ENCODE measurements at regions of chr4 and their contacts with region 1.

Region 1: DNA sequence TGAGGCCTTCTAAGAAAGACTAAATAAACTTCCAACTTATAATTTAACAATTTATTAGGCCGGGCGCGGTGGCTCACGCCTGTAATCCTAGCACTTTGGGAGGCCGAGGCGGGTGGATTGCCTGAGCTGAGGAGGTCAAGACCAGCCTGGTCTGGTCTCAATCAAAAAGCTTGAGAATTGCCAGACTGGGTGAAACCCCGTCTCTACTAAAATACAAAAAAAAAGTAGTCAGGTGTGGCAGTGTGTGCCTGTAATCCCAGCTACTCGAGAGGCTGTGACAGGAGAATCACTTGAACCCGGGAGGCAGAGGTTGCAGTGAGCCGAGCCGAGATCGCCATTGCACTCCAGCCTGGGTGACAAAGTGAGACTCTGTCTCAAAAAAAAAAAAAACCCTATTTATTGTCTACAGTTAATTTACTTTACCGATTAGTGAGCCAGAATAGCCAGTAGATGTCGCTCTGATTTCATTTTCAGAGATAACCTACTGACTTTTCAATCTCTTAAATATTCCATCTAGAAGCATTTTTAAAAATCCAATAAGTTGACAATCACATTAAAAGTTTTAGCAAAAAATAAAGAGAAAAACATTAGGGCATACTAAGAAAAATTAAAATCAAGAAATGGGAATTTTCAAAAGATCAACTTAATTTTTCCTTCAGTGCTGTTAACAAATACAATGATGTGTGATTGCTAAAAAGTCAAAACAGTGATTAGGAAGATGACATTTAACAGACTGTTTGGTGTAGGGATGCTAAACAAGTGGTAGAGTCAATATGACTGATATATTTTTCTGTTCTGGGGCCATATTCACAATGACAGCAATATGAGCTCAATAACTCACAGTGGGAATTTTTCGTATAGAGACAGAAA is 4.3 kb upstream of the SHROOM3 start:
- DNase-seq: peak; percentile 26
- ATAC-seq: no peak
- H3K4me3 Mint-ChIP-seq: no peak overlapping the region
- H3K27ac Mint-ChIP-seq: no peak overlapping the region
- H3K4me1 Mint-ChIP-seq: no peaks in the 10 kb centered on the region
- H3K27me3 Mint-ChIP-seq: peaks cover 30% of the 10 kb centered on the region

Region 2: GRCh38 chr4:76504613-76505465 is 74.1 kb after region 1 on chr4:
- CTCF ChIA-PET with region 1: interaction called, 26 read pairs
- POLR2A ChIA-PET with region 1: no interaction called
- DNase-seq: no peak
- ATAC-seq: no peak
- H3K4me3 Mint-ChIP-seq: no peak overlapping the region
- H3K27ac Mint-ChIP-seq: no peak overlapping the region
- H3K4me1 Mint-ChIP-seq: no peaks in the 10 kb centered on the region
- H3K27me3 Mint-ChIP-seq: peaks cover 15% of the 10 kb centered on the region

Measured in activated CD8-positive, alpha-beta T cell treated with anti-CD3 and anti-CD28 coated beads, Interleukin-2, amount 10 ng/mL, durations not matched to agents 7 days and 5 days (primary cell).